Psoas muscle (tissue), 8 donors: ENCODE measurements at regions of chr7 and their contacts with region 1.

Region 1: DNA sequence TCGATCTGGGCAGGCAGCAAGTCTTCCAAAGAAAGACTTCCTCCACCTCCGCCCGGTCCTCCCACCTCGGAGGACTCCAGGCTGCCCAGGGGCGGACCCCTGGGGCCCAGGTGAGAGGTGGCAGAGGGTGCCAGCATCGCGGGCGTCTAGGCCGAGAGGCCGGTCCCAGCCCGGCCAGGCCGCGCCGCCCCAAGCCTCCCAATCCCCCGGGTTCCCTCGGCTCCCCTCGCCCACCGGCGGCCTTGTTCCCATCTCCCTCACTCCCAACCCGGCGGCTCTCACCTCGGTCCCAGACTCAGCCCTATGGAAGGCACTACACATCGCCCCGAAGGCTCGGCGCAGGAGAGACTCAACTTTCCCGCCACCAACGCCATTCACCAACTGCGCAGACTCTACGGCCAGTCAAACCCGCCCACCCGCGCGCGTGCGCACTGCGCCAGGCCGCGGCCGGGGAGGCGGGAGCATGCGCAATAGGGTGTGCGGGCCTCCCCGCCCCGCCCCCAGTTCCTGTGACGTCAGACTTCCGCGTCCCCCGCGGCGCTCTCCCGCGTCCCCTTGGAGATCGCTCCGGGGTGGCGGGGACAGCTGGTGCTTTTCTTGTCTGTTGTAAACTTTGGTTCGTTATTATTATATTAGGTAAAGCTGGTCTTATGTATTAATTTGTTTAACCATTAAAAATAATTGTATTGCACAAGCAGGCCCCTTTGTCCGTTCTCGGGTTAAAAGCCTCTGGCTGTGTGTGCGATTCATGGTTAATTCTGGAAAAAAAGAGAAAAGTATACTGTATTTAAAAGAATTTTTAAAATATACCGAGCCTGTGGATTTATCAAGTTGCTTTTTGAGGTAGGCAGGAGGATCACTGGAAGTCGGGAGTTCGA is at the start of gene XRCC2:
- DNase-seq: peak; percentile 91 to 95
- ATAC-seq: peak; percentile 99 to 100 (median 99)
- H3K4me3 ChIP-seq: peak within 1 kb of the TSS; percentile 86
- H3K27ac ChIP-seq: peak within 1 kb of the TSS; percentile 96
- H3K4me1 ChIP-seq: peaks cover 7% of the 10 kb centered on the region
- H3K27me3 ChIP-seq: no peaks in the 10 kb centered on the region
- CTCF ChIP-seq: no peak
- total RNA-seq, gene XRCC2: 0.11 to 0.26 (median 0.15) TPM

Region 2: GRCh38 chr7:152759949-152760853 is 84.2 kb after region 1 on chr7:
- intact Hi-C with region 1: loop called in 1 of 2 experiments (anchors 10 kb)
- DNase-seq: peak in 1 of 2 donors; percentile 44
- ATAC-seq: peak; percentile 54 to 68 (median 62)
- H3K4me3 ChIP-seq: peak overlapping the region; percentile 94
- H3K27ac ChIP-seq: peak overlapping the region; percentile 96
- H3K4me1 ChIP-seq: peaks cover 17% of the 10 kb centered on the region
- H3K27me3 ChIP-seq: no peaks in the 10 kb centered on the region
- CTCF ChIP-seq: no peak